Activated naive CD8-positive, alpha-beta T cell treated with anti-CD3 and anti-CD28 coated beads, Interleukin-2, amount 10 ng/mL, durations not matched to agents 7 days and 5 days (primary cell): ENCODE measurements at regions of chr11 and their contacts with region 1.

Region 1: GRCh38 chr11:6612213-6613041 is at the start of gene TAF10:
- DNase-seq: peak; percentile 96
- ATAC-seq: peak; percentile 94
- H3K4me3 Mint-ChIP-seq: peak within 1 kb of the TSS; percentile 94
- H3K27ac Mint-ChIP-seq: peak within 1 kb of the TSS; percentile 93
- H3K4me1 Mint-ChIP-seq: peaks cover 30% of the 10 kb centered on the region
- H3K27me3 Mint-ChIP-seq: no peaks in the 10 kb centered on the region
- total RNA-seq, gene TAF10: 154 to 156 TPM

Region 2: DNA sequence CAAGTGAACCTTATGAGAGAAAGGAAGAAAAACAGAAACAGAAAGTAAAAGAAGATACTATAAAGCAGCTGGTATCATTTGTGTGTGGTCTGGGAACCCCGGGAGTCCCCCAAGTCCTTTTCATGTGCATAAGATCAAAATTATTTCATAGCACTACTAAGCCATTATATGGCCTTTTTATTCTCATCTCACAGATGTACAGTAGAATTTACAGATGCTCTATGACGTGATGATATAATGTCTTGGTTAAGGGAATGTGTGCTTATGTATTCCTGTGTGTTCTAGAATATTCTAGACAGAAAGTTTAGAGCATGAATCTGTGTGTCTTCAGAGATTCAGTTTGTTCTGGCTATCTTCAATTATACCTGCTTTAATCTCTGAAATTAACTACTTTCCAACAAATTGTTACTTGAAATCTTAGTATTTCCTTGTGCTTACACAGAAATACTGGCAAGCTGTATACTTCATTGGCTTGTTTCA is 15.4 kb after region 1 on chr11:
- POLR2A ChIA-PET with region 1: interaction called, 95 read pairs
- DNase-seq: no peak
- ATAC-seq: peak; percentile 76
- H3K4me3 Mint-ChIP-seq: peak overlapping the region; percentile 79
- H3K27ac Mint-ChIP-seq: peak overlapping the region; percentile 91
- H3K4me1 Mint-ChIP-seq: peaks cover 18% of the 10 kb centered on the region
- H3K27me3 Mint-ChIP-seq: no peaks in the 10 kb centered on the region

Region 3: GRCh38 chr11:6673523-6674218 is 61.2 kb after region 1 on chr11:
- POLR2A ChIA-PET with region 1: interaction called, 17 read pairs
- DNase-seq: no peak
- ATAC-seq: peak; percentile 15
- H3K4me3 Mint-ChIP-seq: peak overlapping the region; percentile 47
- H3K27ac Mint-ChIP-seq: peak overlapping the region; percentile 64
- H3K4me1 Mint-ChIP-seq: peaks cover 41% of the 10 kb centered on the region
- H3K27me3 Mint-ChIP-seq: no peaks in the 10 kb centered on the region

Region 4: DNA sequence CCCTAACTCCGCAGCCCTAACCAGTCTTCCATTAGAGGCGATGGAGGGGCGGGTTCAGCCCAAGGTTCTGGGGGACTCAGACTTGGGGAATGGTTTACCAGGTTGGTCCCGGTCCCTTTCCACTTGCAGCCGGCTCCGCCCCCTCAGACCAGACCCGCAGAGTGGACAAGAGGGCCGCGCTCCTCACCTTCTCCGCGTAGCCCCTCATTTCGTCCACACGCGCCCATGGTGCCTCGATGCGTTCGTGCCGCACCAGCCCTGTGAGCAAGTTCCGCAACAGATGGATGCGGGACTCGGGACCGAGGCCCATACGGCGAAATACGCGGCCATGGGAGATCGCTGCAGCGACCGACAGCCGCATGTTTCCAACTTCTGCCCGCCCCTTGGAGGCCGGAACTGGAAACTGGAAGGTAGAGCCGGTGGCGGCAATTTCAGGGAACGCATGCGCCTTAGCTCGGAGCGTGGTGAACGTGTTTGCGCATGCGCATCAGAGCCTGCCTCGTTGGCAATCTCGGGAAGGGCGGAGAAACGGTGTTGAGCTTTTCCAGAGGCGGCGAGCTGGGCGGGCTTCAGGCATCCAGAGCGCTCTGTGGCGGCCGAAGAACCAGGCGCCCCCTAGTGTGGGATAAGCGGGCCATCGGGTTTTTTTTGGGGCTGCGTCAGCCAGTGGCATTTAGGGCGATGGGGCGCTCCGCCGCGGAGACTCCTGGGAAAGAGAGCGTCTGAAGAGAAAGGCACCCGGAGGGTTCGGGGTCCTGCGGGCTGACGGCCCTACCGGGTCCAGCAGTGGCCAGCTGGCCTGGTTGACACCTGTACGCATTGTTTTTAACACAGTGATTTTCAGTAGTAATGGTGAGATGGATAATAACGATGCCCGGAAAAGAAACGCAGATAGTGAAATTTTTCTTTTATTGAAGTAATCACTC is 70.8 kb after region 1 on chr11 and contains the start of gene MRPL17:
- POLR2A ChIA-PET with region 1: interaction called, 33 read pairs
- DNase-seq: peak; percentile 97
- ATAC-seq: peak; percentile 97
- H3K4me3 Mint-ChIP-seq: peak within 1 kb of the TSS; percentile 92
- H3K27ac Mint-ChIP-seq: peak within 1 kb of the TSS; percentile 97
- H3K4me1 Mint-ChIP-seq: peaks cover 15% of the 10 kb centered on the region
- H3K27me3 Mint-ChIP-seq: no peaks in the 10 kb centered on the region
- total RNA-seq, gene MRPL17: 50.9 to 51.4 TPM